ENCODE measurements at regions of chr2 and their contacts with region 1.

Region 1: DNA sequence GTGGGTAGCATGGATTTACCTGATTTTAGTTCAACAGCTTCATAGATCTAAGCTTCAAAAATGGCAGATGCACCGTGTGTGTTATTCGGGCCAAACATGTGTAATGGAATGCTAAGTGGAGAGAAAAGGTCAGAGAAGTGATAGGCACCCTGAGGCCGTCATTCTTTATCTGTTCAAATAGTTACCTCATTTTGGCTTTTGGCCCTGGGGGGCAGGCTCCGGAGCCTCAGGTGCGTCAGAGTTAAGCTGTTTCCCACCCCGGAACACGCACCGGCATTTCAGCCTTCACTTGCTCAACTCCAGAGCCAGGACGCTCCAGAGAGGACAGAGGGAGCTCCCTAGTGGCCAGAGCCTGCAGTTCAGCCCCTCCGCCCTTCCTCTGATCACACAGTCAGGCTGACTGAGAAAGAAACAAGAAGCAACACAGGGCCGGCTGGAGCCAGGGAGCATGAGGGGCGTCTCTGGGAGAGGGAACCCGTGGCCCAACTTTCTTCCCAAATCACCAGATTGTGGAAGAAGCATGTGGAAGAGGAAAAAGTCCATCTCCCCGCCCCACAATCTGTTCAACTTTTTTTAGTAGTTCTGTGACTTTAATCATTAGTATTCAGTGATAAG is 135.2 kb upstream of the EPC2 start:
- DNase-seq: peak; percentile 87
- H3K4me3 ChIP-seq: peak overlapping the region in 2 of 3 experiments; percentile 27 to 62
- H3K27ac ChIP-seq: no peak overlapping the region
- H3K4me1 ChIP-seq: peaks cover 5% of the 10 kb centered on the region
- H3K27me3 ChIP-seq: no peaks in the 10 kb centered on the region
- CTCF ChIP-seq: peak; percentile 87 to 97
- POLR2A ChIP-seq: no peak

Region 2: GRCh38 chr2:147945660-147946059 is 563.7 kb before region 1 on chr2:
- CTCF ChIA-PET with region 1: interaction called, 19 read pairs
- POLR2A ChIA-PET with region 1: no interaction called
- dilution Hi-C with region 1: no loop called
- intact Hi-C with region 1: no loop called
- DNase-seq: peak; percentile 28
- H3K4me3 ChIP-seq: no peak overlapping the region
- H3K27ac ChIP-seq: no peak overlapping the region
- H3K4me1 ChIP-seq: no peaks in the 10 kb centered on the region
- H3K27me3 ChIP-seq: no peaks in the 10 kb centered on the region
- CTCF ChIP-seq: no peak
- POLR2A ChIP-seq: no peak

Region 3: GRCh38 chr2:148020111-148021058 is 489.0 kb before region 1 on chr2 and contains the start of gene ORC4:
- CTCF ChIA-PET with region 1: interaction called, 59 read pairs
- POLR2A ChIA-PET with region 1: no interaction called
- dilution Hi-C with region 1: no loop called
- intact Hi-C with region 1: loop called (anchors 1 kb)
- DNase-seq: peak; percentile 100
- H3K4me3 ChIP-seq: peak within 1 kb of the TSS; percentile 77 to 88 (median 88)
- H3K27ac ChIP-seq: peak within 1 kb of the TSS; percentile 74
- H3K4me1 ChIP-seq: peaks cover 25% of the 10 kb centered on the region
- H3K27me3 ChIP-seq: no peaks in the 10 kb centered on the region
- CTCF ChIP-seq: peak; percentile 28 to 65
- POLR2A ChIP-seq: no peak
- total RNA-seq, gene ORC4: 24.5 and 27.0 TPM in 2 replicates

Region 4: DNA sequence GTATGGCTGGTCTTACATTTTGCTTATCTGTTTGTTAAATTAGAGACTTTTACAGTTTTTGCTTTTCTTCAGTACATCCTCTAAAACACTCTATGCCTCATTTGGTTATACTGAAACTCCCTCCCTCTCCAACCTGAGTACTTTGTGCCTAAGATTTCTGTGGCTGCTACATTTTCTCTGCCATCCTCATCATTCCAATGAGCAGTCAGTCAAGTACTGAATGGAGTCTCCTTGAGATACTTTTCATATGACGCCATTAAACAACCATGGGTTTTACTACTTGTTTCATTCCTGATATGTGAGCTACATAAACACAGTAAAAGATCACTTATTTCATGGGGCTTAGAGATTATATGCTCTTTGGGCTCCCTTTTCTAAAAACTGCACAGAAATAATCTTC is 61.5 kb before region 1 on chr2:
- CTCF ChIA-PET with region 1: interaction called, 11 read pairs
- POLR2A ChIA-PET with region 1: no interaction called
- dilution Hi-C with region 1: no loop called
- intact Hi-C with region 1: no loop called
- DNase-seq: no peak
- H3K4me3 ChIP-seq: no peak overlapping the region
- H3K27ac ChIP-seq: no peak overlapping the region
- H3K4me1 ChIP-seq: no peaks in the 10 kb centered on the region
- H3K27me3 ChIP-seq: no peaks in the 10 kb centered on the region
- CTCF ChIP-seq: no peak
- POLR2A ChIP-seq: no peak

Region 5: GRCh38 chr2:148538375-148538774 is 29.0 kb after region 1 on chr2:
- CTCF ChIA-PET with region 1: interaction called, 10 read pairs
- POLR2A ChIA-PET with region 1: no interaction called
- dilution Hi-C with region 1: no loop called
- intact Hi-C with region 1: no loop called
- DNase-seq: no peak
- H3K4me3 ChIP-seq: no peak overlapping the region
- H3K27ac ChIP-seq: no peak overlapping the region
- H3K4me1 ChIP-seq: no peaks in the 10 kb centered on the region
- H3K27me3 ChIP-seq: peaks cover 0 to 2% of the 10 kb centered on the region in 2 experiments
- CTCF ChIP-seq: no peak
- POLR2A ChIP-seq: no peak

Region 6: GRCh38 chr2:148560496-148560895 is 51.1 kb after region 1 on chr2:
- CTCF ChIA-PET with region 1: no interaction called
- POLR2A ChIA-PET with region 1: no interaction called
- dilution Hi-C with region 1: no loop called
- intact Hi-C with region 1: no loop called
- DNase-seq: no peak
- H3K4me3 ChIP-seq: no peak overlapping the region
- H3K27ac ChIP-seq: no peak overlapping the region
- H3K4me1 ChIP-seq: no peaks in the 10 kb centered on the region
- H3K27me3 ChIP-seq: no peaks in the 10 kb centered on the region
- CTCF ChIP-seq: no peak
- POLR2A ChIP-seq: no peak

Region 7: DNA sequence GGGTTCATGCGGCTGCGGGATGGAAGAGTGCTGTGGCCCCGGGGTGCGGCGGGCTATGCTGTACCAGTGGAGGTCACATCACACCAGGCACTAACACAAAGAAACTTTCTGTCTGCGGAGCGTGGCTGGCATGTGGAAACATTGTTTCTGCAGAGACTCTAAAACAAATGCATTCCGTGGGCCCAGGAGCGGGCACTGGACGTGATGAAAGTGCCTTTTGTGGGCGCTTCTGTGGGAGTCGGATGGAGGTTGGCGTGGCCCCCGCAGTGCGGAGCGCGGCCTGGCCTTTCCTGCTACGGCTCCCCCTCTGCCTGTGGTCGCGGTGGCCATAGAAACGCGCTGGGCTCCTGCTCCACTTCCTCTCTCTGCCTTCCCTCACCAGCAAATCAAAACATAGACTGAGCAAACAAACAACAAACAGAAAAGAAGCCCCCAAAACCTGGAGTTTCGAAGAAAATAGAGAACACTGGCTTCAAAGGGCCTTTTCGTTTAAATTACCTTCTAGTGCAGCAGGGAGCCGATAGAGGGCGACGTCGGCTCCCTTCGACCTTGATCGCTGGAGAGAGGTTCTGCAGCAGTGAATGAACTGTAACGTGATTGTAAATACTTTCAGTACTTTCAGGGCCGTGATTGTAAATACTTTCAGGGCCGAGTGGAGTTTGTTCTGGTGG is 417.0 kb after region 1 on chr2:
- CTCF ChIA-PET with region 1: no interaction called
- POLR2A ChIA-PET with region 1: no interaction called
- dilution Hi-C with region 1: no loop called
- intact Hi-C with region 1: no loop called
- DNase-seq: peak; percentile 58
- H3K4me3 ChIP-seq: no peak overlapping the region
- H3K27ac ChIP-seq: no peak overlapping the region
- H3K4me1 ChIP-seq: no peaks in the 10 kb centered on the region
- H3K27me3 ChIP-seq: no peaks in the 10 kb centered on the region
- CTCF ChIP-seq: peak; percentile 74 to 75
- POLR2A ChIP-seq: no peak

Measured in endothelial cell of umbilical vein (primary cell).